ENCODE measurements at regions of chr3 and their contacts with region 1.

Region 1: GRCh38 chr3:111956995-111957734 is 21.7 kb upstream of the ABHD10 start:
- DNase-seq: no peak
- ATAC-seq: no peak
- H3K4me3 ChIP-seq: no peak overlapping the region
- H3K27ac ChIP-seq: no peak overlapping the region
- H3K4me1 ChIP-seq: no peaks in the 10 kb centered on the region
- H3K27me3 ChIP-seq: no peaks in the 10 kb centered on the region
- CTCF ChIP-seq: no peak

Region 2: DNA sequence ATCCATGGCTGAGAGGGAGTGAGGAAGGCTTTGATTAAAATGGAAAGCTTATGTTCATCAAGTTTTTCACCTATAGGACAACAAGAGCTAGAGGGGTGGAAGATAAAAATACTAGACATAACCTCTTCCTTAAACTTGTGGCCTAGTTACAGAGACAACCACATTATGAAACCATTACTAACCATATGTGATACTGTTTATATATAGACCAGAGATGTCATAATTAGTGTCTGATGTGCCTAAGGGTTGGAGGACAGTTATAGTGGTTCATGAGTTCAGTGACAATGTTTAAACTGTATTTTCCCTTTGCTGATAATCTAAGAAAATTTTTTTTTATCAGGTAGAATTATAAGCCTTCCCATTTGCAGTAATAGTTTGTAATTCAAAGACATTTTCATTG is 74.4 kb before region 1 on chr3:
- intact Hi-C with region 1: loop called in 1 of 2 experiments (anchors 5 kb)
- DNase-seq: no peak
- ATAC-seq: peak in 1 of 4 donors; percentile 32
- H3K4me3 ChIP-seq: no peak overlapping the region
- H3K27ac ChIP-seq: no peak overlapping the region
- H3K4me1 ChIP-seq: no peaks in the 10 kb centered on the region
- H3K27me3 ChIP-seq: no peaks in the 10 kb centered on the region
- CTCF ChIP-seq: no peak

Region 3: GRCh38 chr3:112038863-112039262 is 81.7 kb after region 1 on chr3:
- intact Hi-C with region 1: no loop called
- DNase-seq: no peak
- ATAC-seq: no peak
- H3K4me3 ChIP-seq: no peak overlapping the region
- H3K27ac ChIP-seq: no peak overlapping the region
- H3K4me1 ChIP-seq: peaks cover 2% of the 10 kb centered on the region
- H3K27me3 ChIP-seq: no peaks in the 10 kb centered on the region
- CTCF ChIP-seq: no peak